ENCODE measurements at regions of chr18 and their contacts with region 1.

Region 1: GRCh38 chr18:47930931-47931717 is 665 bp upstream of the SMAD2 start:
- DNase-seq: peak; percentile 86 to 92
- H3K4me3 ChIP-seq: peak overlapping the region; percentile 61 to 96 (median 72)
- H3K27ac ChIP-seq: peak overlapping the region; percentile 96
- H3K4me1 ChIP-seq: peaks cover 4 to 17% (median 16%) of the 10 kb centered on the region in 4 experiments; a peak in 6 of 7 replicates
- H3K27me3 ChIP-seq: no peaks in the 10 kb centered on the region
- CTCF ChIP-seq: no peak
- EP300 ChIP-seq: no peak
- POLR2A ChIP-seq: peak; percentile 55 to 95
- RAD21 ChIP-seq: no peak; a peak in 1 of 4 replicates

Region 2: GRCh38 chr18:47901624-47902362 is 29.3 kb before region 1 on chr18:
- CTCF ChIA-PET with region 1: interaction called, 9 read pairs
- POLR2A ChIA-PET with region 1: interaction called, 10 read pairs
- DNase-seq: no peak
- H3K4me3 ChIP-seq: no peak overlapping the region; a peak in 1 of 8 replicates
- H3K27ac ChIP-seq: no peak overlapping the region
- H3K4me1 ChIP-seq: peaks cover 3 to 29% (median 13%) of the 10 kb centered on the region in 4 experiments; a peak in 5 of 7 replicates
- H3K27me3 ChIP-seq: no peaks in the 10 kb centered on the region
- CTCF ChIP-seq: no peak
- EP300 ChIP-seq: no peak
- POLR2A ChIP-seq: no peak
- RAD21 ChIP-seq: no peak

Region 3: DNA sequence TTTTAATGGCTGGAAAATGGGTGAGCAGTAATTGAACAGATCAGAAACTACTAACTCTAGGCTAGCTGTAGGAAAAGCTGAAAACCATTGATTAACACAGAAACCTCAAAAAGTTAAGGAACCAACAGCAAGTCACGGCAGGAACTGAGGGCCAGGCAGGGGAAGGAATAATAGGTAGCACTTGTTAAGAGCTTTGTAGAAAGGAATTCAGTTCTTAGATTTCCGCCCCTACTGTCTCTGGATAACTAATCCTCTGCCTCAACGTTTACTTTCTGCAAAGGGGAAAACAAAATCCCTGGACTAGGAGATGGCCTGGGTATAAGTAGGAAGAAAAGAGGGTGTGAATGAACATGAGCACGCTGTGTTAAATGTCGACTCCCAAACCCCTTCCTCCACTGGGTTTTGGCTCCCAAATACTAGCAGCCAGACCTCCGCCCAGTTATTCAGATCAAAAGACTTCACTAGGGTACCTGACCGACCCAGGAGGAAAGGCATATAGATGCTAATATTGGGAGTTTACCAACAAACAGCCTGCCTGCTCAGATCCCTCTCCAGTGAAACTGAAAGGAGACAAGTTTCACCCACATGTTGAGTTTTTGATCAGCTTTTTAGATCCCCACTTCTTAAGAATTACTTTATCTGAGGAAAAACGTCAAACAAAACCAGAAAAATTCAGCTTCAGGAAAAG is 13.1 kb before region 1 on chr18:
- CTCF ChIA-PET with region 1: interaction called, 3 read pairs
- POLR2A ChIA-PET with region 1: interaction called, 18 read pairs
- DNase-seq: no peak
- H3K4me3 ChIP-seq: peak overlapping the region; percentile 5 to 53 (median 27); a peak in 6 of 8 replicates
- H3K27ac ChIP-seq: peak overlapping the region; percentile 60
- H3K4me1 ChIP-seq: peaks cover 7 to 20% (median 13%) of the 10 kb centered on the region in 4 experiments; a peak in 6 of 7 replicates
- H3K27me3 ChIP-seq: no peaks in the 10 kb centered on the region
- CTCF ChIP-seq: no peak
- EP300 ChIP-seq: no peak
- POLR2A ChIP-seq: no peak; a peak in 1 of 3 replicates
- RAD21 ChIP-seq: no peak

Region 4: DNA sequence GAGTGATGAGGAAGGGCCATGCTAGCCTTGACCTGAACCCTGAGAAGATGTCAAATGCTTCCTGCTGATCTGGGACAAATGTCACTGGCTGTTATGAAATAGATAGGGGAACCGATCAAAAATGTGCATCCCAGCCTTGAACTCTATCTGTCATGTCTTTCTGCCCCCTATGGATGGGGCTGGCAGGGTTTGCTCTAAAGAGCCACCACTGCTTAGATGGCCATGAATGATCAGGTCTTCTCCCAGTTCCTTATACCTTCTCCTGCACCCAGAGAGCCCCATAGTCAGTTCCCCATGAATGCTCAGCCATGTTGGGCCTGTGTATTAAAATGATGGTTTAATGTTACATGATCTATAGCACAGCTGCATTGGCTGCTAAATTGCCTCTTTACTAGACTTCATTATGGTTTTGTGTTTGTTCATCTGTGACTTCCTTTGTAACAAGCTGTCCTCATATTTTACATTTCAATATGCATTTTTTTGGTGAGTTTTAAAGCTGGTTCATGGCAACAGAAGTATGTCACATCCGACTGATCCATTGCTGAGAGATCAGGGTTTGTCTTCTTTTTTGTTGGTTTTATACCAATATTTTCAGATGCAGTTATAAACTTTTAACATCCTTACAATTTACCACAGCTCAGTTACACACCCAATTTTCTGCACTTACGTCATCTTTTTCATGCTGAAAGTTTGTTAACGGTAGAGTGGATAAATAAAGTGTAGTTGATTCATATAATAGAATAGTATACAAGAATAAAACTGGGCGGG is 55.7 kb after region 1 on chr18:
- CTCF ChIA-PET with region 1: interaction called, 12 read pairs
- POLR2A ChIA-PET with region 1: no interaction called
- DNase-seq: no peak
- H3K4me3 ChIP-seq: no peak overlapping the region
- H3K27ac ChIP-seq: no peak overlapping the region
- H3K4me1 ChIP-seq: peaks cover 0 to 5% (median under 1%) of the 10 kb centered on the region in 4 experiments; a peak in 4 of 7 replicates
- H3K27me3 ChIP-seq: no peaks in the 10 kb centered on the region
- CTCF ChIP-seq: no peak
- EP300 ChIP-seq: no peak
- POLR2A ChIP-seq: no peak
- RAD21 ChIP-seq: no peak

Region 5: DNA sequence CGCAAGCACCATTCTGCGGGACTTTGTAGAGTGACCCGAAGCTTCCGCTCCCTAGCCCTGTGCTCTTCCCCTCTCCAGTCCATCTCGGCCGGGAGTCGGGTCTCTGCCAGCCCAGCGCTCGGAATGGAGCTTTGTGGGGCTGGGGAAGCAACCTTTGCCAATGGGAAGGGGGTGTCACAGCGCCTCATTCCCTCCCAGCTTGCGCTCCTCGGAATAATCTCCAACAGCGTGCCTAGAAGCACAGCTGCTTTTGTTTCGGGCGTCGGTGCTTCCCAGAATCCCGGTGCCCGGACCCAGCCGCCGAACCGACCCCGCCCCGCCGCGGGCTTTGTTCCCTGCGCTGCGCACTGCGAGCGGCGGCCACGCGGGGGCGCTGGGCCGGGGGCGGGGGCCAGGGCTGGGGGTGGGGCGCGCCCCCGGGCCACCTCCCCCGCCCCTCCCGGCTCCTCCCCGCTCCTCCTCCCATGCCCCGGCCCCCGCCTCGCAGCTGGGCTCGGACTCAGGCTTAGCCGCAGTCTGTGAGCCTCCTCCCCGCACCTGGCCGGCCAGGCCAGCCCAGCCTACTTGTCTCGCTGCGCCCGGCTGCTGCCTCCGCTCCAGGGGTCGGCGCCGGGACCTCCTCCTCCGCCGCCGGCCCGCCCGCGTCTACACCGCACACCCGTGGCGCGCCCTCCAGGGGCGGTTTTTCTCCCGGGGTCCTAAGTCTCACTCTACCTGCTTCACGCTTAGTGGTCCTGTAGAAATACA is 77.0 kb after region 1 on chr18:
- CTCF ChIA-PET with region 1: interaction called, 8 read pairs
- POLR2A ChIA-PET with region 1: interaction called, 11 read pairs
- DNase-seq: peak; percentile 70 to 88
- H3K4me3 ChIP-seq: peak overlapping the region; percentile 37 to 70 (median 50)
- H3K27ac ChIP-seq: peak overlapping the region; percentile 14; the same call in 1 of the 2 replicates
- H3K4me1 ChIP-seq: peaks cover 0 to 18% (median 10%) of the 10 kb centered on the region in 4 experiments; a peak in 5 of 7 replicates
- H3K27me3 ChIP-seq: peaks cover 0 to 16% (median 11%) of the 10 kb centered on the region in 4 experiments; a peak in 5 of 7 replicates
- CTCF ChIP-seq: peak; percentile 49 to 55 (median 52)
- EP300 ChIP-seq: no peak
- POLR2A ChIP-seq: peak; percentile 53 to 61; a peak in 2 of 3 replicates
- RAD21 ChIP-seq: 0 out of 4 replicates have a peak, but pooled peaks of 1 of the 2 experiments have one; percentile 5

Measured in H1 (cell line).